Sciatic nerve (tissue), 2 donors: ENCODE measurements at regions of chr7 and their contacts with region 1.

Region 1: GRCh38 chr7:80453699-80454340 is 58.0 kb downstream of the GNAT3 start:
- DNase-seq: no peak
- ATAC-seq: no peak

Region 2: DNA sequence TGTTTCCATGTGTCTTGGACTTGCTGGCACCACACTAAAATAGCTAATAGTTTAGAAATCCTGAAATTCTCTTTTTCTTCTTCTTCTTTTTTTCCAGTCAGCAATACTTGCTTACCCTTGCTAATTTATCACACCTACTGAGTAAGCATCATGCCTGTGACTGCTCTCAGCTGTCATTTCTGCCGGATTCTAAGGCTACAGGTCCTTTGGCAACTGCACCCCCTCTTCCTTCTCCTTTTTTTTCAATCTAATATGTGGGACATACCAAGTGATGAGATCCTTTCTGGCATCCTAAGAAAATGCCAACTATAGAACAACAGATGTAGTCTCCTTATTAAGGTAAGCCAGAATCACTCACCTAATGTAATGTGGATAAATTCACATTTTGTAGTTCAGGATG is 1445.0 kb before region 1 on chr7:
- intact Hi-C with region 1: no loop called
- DNase-seq: no peak
- ATAC-seq: no peak

Region 3: GRCh38 chr7:80053124-80053523 is 400.7 kb before region 1 on chr7:
- intact Hi-C with region 1: loop called (anchors 10 kb)
- DNase-seq: no peak
- ATAC-seq: no peak